Activated CD4-positive, alpha-beta T cell treated with anti-CD3 and anti-CD28 coated beads for 36 hours (primary cell): ENCODE measurements at regions of chr17 and their contacts with region 1.

Region 1: GRCh38 chr17:31216053-31216751 is 80.8 kb downstream of the OMG start:
- DNase-seq: no peak
- ATAC-seq: no peak
- H3K4me3 Mint-ChIP-seq: no peak overlapping the region
- H3K27ac Mint-ChIP-seq: no peak overlapping the region
- H3K4me1 Mint-ChIP-seq: no peaks in the 10 kb centered on the region
- H3K27me3 Mint-ChIP-seq: no peaks in the 10 kb centered on the region

Region 2: GRCh38 chr17:30906101-30906911 is 309.9 kb before region 1 on chr17 and contains the start of gene TEFM:
- CTCF ChIA-PET with region 1: interaction called, 3 read pairs
- POLR2A ChIA-PET with region 1: no interaction called
- intact Hi-C with region 1: loop called in 1 of 2 experiments (anchors 10 kb)
- DNase-seq: peak; percentile 93
- ATAC-seq: peak; percentile 97
- H3K4me3 Mint-ChIP-seq: peak within 1 kb of the TSS; percentile 88
- H3K27ac Mint-ChIP-seq: peak within 1 kb of the TSS; percentile 87
- H3K4me1 Mint-ChIP-seq: peaks cover 41% of the 10 kb centered on the region
- H3K27me3 Mint-ChIP-seq: no peaks in the 10 kb centered on the region
- total RNA-seq, gene TEFM: 13.4 to 15.3 TPM

Region 3: DNA sequence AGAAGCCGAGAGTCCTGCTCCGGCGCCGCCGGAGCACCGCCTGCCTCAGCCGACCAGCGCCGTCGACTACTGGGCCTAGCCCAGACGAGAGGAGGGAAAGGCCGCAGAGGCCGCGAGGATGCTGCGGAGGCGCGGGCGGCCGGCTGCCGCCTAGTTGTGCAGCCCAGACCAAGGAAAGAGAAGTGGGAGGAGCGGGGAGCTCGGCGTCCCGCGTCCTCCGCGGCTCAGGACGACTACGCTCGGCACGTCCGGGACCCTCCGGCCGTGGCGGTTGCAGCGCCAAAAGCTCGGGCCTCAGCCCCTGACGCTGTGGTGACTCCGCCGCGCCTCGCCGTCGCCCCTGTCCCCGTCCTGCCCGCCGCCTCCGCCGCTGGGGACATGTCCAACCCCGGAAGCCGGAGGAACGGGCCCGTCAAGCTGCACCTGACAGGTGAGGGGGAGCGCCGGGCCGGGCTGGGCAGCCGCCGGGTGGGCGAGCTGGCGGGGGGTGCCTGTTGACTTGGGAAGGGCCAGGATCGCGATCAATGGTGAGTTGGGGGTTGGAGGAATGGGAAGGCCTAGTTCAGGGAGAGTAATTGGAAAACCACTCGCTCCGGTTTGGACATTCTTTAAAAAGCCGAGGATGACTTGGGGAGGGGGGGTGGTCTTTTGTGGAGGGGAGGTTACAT is 207.7 kb before region 1 on chr17:
- CTCF ChIA-PET with region 1: interaction called, 4 read pairs
- POLR2A ChIA-PET with region 1: no interaction called
- intact Hi-C with region 1: loop called (anchors 1 to 5 kb)
- DNase-seq: peak; percentile 70
- ATAC-seq: peak; percentile 71
- H3K4me3 Mint-ChIP-seq: peak overlapping the region; percentile 73
- H3K27ac Mint-ChIP-seq: peak overlapping the region; percentile 75
- H3K4me1 Mint-ChIP-seq: peaks cover 18% of the 10 kb centered on the region
- H3K27me3 Mint-ChIP-seq: peaks cover 5% of the 10 kb centered on the region

Region 4: DNA sequence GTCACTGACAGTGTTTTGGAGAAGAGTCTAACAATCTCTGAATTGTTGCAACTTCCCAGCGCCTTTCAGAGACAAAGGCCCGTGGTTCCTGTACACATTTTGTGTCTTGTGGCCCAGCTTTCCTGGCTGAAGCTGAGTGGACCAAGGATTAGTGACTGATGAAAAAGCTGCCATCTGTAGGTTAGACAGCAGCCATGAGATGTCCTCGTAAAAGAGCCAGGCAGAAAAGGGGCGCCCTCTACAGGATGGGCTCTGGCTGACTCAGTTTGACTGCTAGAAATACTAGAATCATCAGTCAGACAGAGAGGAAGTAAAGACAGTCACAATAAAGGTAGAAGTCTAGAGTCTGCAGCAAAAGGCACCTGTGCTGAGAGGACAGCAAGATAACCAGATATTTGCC is 147.9 kb before region 1 on chr17:
- CTCF ChIA-PET with region 1: interaction called, 3 read pairs
- POLR2A ChIA-PET with region 1: no interaction called
- intact Hi-C with region 1: loop called in 1 of 2 experiments (anchors 5 kb)
- DNase-seq: peak; percentile 82
- ATAC-seq: peak; percentile 91
- H3K4me3 Mint-ChIP-seq: no peak overlapping the region
- H3K27ac Mint-ChIP-seq: no peak overlapping the region
- H3K4me1 Mint-ChIP-seq: peaks cover 2% of the 10 kb centered on the region
- H3K27me3 Mint-ChIP-seq: no peaks in the 10 kb centered on the region

Region 5: GRCh38 chr17:31089471-31089870 is 126.7 kb before region 1 on chr17:
- CTCF ChIA-PET with region 1: no interaction called
- POLR2A ChIA-PET with region 1: no interaction called
- intact Hi-C with region 1: no loop called
- DNase-seq: no peak
- ATAC-seq: no peak
- H3K4me3 Mint-ChIP-seq: no peak overlapping the region
- H3K27ac Mint-ChIP-seq: no peak overlapping the region
- H3K4me1 Mint-ChIP-seq: no peaks in the 10 kb centered on the region
- H3K27me3 Mint-ChIP-seq: no peaks in the 10 kb centered on the region

Region 6: GRCh38 chr17:31197991-31198390 is 18.2 kb before region 1 on chr17:
- CTCF ChIA-PET with region 1: interaction called, 16 read pairs
- POLR2A ChIA-PET with region 1: no interaction called
- intact Hi-C with region 1: no loop called
- DNase-seq: no peak
- ATAC-seq: no peak
- H3K4me3 Mint-ChIP-seq: no peak overlapping the region
- H3K27ac Mint-ChIP-seq: no peak overlapping the region
- H3K4me1 Mint-ChIP-seq: peaks cover 3% of the 10 kb centered on the region
- H3K27me3 Mint-ChIP-seq: no peaks in the 10 kb centered on the region